Adrenal gland (tissue), 19 donors: ENCODE measurements at regions of chr12 and their contacts with region 1.

Region 1: GRCh38 chr12:54191550-54192022 is 2.8 kb upstream of the SMUG1 start:
- DNase-seq: peak; percentile 80 to 94 (median 88)
- H3K4me3 ChIP-seq: no peak overlapping the region
- H3K27ac ChIP-seq: no peak overlapping the region
- H3K4me1 ChIP-seq: peaks cover 4 to 27% of the 10 kb centered on the region in 2 donors
- H3K27me3 ChIP-seq: no peaks in the 10 kb centered on the region
- CTCF ChIP-seq: peak; percentile 52 to 92 (median 81)
- POLR2A ChIP-seq: no peak

Region 2: DNA sequence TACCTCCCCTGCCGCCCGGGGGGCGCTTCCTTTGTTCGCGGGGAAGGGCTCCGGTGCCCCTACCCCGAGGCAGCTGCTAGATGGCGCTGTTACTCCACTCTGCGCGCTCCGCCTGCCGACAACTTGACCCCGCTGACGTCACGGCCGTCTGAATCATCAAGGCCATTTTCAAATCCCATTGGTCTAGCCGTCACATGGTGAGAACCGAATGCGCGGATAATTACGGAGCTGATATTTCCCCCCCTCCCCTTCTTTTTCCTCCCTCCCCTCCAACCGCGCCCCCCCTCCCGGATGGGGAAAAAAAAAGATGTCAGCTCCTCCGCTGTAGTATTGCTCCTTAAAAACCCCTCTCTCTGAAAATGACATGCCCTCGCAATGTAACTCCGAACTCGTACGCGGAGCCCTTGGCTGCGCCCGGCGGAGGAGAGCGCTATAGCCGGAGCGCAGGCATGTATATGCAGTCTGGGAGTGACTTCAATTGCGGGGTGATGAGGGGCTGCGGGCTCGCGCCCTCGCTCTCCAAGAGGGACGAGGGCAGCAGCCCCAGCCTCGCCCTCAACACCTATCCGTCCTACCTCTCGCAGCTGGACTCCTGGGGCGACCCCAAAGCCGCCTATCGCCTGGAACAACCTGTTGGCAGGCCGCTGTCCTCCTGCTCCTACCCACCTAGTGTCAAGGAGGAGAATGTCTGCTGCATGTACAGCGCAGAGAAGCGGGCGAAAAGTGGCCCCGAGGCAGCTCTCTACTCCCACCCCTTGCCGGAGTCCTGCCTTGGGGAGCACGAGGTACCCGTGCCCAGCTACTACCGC is 206.5 kb before region 1 on chr12 and contains the start of gene HOXC10:
- intact Hi-C with region 1: no loop called
- DNase-seq: peak; percentile 90 to 98 (median 93)
- H3K4me3 ChIP-seq: peak within 1 kb of the TSS in 1 of 4 donors; percentile 48
- H3K27ac ChIP-seq: peak within 1 kb of the TSS in 2 of 5 donors; percentile 9 to 11
- H3K4me1 ChIP-seq: peaks cover 4 to 13% of the 10 kb centered on the region in 2 donors
- H3K27me3 ChIP-seq: peaks cover 89% of the 10 kb centered on the region
- CTCF ChIP-seq: peak; percentile 59 to 94 (median 68)
- POLR2A ChIP-seq: no peak
- total RNA-seq, gene HOXC10: 0.68 to 4.5 (median 2.3) TPM in 6 of 9 donors, not detected in the others

Region 3: DNA sequence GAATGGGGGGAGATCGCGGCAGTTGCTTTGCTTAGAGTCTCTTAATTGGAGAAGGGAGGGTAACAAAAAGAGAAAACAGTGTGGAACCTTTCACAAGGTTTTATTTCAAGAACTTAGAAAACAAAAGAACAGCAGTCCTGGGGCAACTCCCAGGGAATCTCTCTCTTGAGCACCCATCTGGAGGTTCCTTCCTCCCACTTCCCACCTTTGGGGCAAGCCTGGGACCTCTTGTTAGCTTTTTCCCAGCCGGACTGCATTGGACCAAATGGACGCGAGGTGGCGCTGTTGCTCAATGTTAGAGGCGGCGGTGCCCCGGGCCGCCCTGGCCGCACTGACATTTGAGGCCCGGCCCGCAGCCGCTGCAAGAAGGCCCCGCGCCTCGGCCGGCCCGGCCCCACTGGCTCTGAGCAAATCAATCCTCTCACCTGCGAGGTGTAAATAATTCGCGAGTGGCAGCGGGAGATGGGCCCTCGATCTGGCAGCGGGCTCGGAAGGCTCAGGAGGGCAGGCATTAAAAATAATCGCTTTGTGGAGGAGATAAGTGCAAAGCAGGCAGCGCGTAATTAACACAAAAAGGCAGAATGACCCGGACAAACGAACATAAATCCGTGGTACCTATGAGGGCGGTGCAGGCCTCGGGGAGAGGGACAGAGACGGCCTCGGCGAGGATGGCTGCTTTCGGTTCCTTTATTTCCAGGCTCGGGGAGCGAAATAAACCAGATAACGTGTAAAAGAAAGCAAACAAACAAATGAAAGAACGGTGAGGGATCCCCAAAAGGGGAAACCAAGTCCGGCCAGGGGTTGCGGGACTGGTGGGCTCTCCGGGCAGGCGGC is 185.5 kb before region 1 on chr12:
- intact Hi-C with region 1: loop called in 1 of 2 experiments (anchors 5 kb)
- DNase-seq: peak; percentile 72 to 96 (median 88)
- H3K4me3 ChIP-seq: peak overlapping the region in 1 of 4 donors; percentile 20
- H3K27ac ChIP-seq: peak overlapping the region in 3 of 5 donors; percentile 59 to 87 (median 75)
- H3K4me1 ChIP-seq: peaks cover 3 to 8% of the 10 kb centered on the region in 2 donors
- H3K27me3 ChIP-seq: peaks cover 3% of the 10 kb centered on the region
- CTCF ChIP-seq: peak; percentile 86 to 97 (median 96)
- POLR2A ChIP-seq: no peak

Region 4: DNA sequence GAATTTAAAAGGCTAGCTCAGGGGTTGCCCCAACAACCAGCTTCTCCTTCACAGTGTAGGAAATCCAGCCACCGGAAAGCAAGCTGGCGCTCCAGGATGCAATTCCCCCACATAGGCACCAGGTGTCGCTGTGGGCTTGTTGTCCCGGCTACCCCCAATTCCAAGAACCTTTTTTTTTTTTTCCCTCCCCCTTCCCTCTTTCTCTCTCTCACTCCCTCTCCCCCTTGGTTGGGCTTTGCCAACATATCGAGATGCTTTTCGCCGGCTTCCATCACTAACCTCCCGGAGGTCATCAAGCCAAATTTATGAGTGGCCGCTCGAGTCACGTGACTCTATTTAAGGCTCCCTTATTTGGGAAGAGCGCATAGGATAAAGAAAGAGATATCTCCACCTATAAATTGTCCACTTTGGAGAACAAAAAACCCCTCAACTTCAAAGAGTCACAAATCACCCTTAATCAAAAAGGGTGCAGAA is 158.9 kb before region 1 on chr12 and contains the start of gene HOXC5:
- intact Hi-C with region 1: loop called (anchors 5 kb)
- DNase-seq: peak; percentile 71 to 95 (median 79)
- H3K4me3 ChIP-seq: peak within 1 kb of the TSS in 2 of 4 donors; percentile 33 to 47
- H3K27ac ChIP-seq: peak within 1 kb of the TSS in 2 of 5 donors; percentile 88 to 95
- H3K4me1 ChIP-seq: peaks cover 13 to 54% of the 10 kb centered on the region in 2 donors
- H3K27me3 ChIP-seq: no peaks in the 10 kb centered on the region
- CTCF ChIP-seq: peak; percentile 85 to 99 (median 96)
- POLR2A ChIP-seq: no peak
- total RNA-seq, gene HOXC5: 0.36 to 1.9 (median 0.86) TPM

Region 5: GRCh38 chr12:54259194-54260011 is 67.8 kb after region 1 on chr12:
- intact Hi-C with region 1: no loop called
- DNase-seq: peak; percentile 78 to 90 (median 85)
- H3K4me3 ChIP-seq: peak overlapping the region in 2 of 4 donors; percentile 5 to 64
- H3K27ac ChIP-seq: peak overlapping the region; percentile 3 to 88 (median 55)
- H3K4me1 ChIP-seq: peaks cover 41 to 49% of the 10 kb centered on the region in 2 donors
- H3K27me3 ChIP-seq: no peaks in the 10 kb centered on the region
- CTCF ChIP-seq: no peak
- POLR2A ChIP-seq: no peak